ENCODE measurements at regions of chr11 and their contacts with region 1.

Region 1: DNA sequence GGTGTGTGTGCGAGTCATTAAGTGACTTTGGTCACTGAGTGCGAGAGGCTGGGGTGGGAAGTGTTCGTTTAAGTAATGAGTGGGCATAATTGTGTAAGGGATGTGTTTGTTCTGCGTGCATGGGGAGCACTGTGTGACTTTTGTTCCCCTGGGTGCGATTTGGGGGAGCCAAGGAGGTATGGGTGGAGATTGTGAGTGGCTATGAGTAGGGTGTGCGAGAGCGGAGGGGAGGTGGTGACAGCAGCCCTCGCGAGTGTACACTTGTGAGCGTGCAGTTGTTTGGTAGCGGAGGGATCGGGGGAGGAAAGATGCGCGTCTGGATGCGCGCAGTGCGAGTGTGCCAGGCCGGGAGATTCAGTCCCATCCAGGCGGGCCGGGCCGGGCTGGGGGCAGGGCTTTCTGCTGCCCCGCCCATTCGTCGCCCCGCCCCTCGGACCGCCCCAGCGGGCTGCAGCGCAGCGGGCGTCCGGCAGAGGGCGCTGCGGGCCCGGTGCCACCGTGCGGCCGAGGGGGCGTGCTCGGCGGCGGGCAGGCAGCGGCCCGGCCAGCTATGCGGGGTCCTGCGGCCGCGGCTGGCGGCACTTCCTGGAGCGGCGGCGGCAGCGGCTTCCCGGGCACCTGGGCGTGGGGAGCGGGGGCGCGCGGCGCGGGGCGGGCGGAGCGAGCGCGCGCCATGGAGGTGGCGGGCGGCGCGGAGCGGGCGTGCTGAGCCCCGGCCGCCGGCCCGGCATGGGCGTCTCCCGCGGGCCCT is at the start of gene DGKZ:
- DNase-seq: peak; percentile 92
- H3K4me3 Mint-ChIP-seq: peak within 1 kb of the TSS; percentile 86
- H3K27ac Mint-ChIP-seq: peak within 1 kb of the TSS; percentile 90
- H3K4me1 Mint-ChIP-seq: peaks cover 80% of the 10 kb centered on the region
- H3K27me3 Mint-ChIP-seq: no peaks in the 10 kb centered on the region
- total RNA-seq, gene DGKZ: 85.3 to 88.7 TPM

Region 2: DNA sequence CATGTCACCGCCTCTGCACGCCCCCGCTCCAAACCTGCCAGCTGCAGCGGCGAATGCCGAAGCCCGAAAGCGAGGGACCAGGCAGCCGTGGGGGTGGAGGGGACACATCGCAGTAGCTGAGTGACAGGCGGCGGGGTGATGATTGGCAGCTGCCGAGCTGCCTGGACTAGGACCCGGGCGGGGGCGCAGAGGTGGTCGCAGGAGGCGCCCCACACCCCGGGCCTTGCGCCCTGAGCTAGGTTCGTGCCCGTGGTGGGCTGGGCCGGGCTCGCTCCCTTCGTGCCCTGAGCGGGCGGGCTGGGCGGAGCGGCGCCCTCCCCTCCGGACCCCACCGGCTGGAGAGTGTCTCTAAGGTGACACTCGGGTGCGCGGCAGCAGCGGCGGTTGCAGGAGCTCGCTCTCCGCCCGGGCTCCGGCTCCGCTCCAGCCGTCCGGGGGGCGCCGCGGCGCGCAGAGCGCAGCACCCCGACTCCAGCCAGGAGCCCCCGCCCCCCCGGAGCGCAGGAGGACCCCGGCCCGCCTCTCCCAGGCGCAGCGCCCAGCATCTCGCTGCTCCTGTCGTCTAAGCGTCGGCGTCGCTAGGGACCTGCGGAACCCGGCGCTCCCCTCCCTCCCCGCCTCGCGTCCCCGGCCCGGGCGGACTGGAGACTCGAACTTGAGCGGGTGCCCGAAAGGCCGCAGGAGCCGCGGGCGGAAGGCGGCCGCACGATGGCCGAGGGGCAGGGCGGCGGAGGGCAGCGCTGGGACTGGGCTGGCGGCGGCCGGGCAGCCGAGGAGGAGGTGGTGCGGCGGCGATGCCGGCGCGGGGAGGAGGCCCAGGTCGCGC is 14.3 kb before region 1 on chr11:
- CTCF ChIA-PET with region 1: interaction called, 52 read pairs
- POLR2A ChIA-PET with region 1: interaction called, 6 read pairs
- intact Hi-C with region 1: loop called (anchors 1 kb)
- DNase-seq: peak; percentile 64
- H3K4me3 Mint-ChIP-seq: peak overlapping the region; percentile 73
- H3K27ac Mint-ChIP-seq: peak overlapping the region; percentile 8
- H3K4me1 Mint-ChIP-seq: peaks cover 67% of the 10 kb centered on the region
- H3K27me3 Mint-ChIP-seq: no peaks in the 10 kb centered on the region

Region 3: GRCh38 chr11:46367244-46367915 is 20.3 kb after region 1 on chr11:
- CTCF ChIA-PET with region 1: interaction called, 346 read pairs
- POLR2A ChIA-PET with region 1: interaction called, 4 read pairs
- intact Hi-C with region 1: loop called (anchors 1 kb)
- DNase-seq: peak; percentile 84
- H3K4me3 Mint-ChIP-seq: no peak overlapping the region
- H3K27ac Mint-ChIP-seq: peak overlapping the region; percentile 67
- H3K4me1 Mint-ChIP-seq: peaks cover 38% of the 10 kb centered on the region
- H3K27me3 Mint-ChIP-seq: no peaks in the 10 kb centered on the region

Region 4: DNA sequence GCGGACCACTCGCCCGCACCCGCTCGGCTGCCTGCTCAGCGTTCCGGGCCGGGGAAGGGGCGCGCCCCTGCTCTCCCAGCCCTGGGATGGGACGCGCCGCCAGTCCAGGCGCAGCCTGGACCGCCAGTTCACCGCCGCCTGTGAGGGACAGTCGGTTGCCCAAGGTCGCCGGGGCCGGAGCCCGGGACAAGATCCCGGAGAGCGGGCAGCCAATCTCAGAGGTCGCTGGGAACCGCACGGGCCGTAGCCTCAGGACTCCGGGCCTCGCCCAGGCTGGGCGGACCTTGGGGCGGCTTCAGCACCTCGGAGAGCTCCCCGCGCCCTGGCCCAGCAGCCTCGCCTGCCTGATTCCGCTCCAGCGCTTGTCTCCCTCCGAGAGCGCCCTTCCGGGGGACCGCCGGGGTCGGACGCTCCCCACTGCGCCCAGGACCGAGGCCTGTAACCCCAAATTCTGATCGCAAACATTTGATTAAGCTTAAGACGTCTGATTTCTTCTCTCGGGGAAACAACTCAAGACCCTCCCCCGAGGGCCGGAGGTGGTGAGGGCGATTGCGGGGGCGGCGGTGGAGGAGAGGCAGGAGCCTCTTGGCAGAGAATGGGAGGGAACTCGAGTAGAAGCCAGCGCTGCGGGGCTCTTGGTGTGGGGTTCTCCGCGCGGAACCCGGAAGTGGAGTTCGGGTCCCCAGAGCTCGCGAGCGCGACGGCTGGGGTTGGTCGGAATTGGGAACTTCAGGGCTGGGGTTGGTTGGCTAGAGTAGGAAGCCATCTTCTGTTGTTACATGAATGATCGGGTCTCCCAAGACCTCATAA is 45.6 kb after region 1 on chr11:
- CTCF ChIA-PET with region 1: interaction called, 83 read pairs
- POLR2A ChIA-PET with region 1: interaction called, 3 read pairs
- intact Hi-C with region 1: no loop called
- DNase-seq: peak; percentile 87
- H3K4me3 Mint-ChIP-seq: peak overlapping the region; percentile 71
- H3K27ac Mint-ChIP-seq: no peak overlapping the region
- H3K4me1 Mint-ChIP-seq: peaks cover 27% of the 10 kb centered on the region
- H3K27me3 Mint-ChIP-seq: peaks cover 37% of the 10 kb centered on the region

Region 5: GRCh38 chr11:46700241-46701077 is 353.4 kb after region 1 on chr11 and contains the starts of genes ARHGAP1 and ZNF408:
- CTCF ChIA-PET with region 1: interaction called, 5 read pairs
- POLR2A ChIA-PET with region 1: interaction called, 3 read pairs
- intact Hi-C with region 1: loop called (anchors 2 kb)
- DNase-seq: peak; percentile 100
- H3K4me3 Mint-ChIP-seq: peak within 1 kb of the TSS; percentile 92
- H3K27ac Mint-ChIP-seq: peak within 1 kb of the TSS; percentile 95
- H3K4me1 Mint-ChIP-seq: peaks cover 50% of the 10 kb centered on the region
- H3K27me3 Mint-ChIP-seq: no peaks in the 10 kb centered on the region
- total RNA-seq, gene ARHGAP1: 45.8 to 46.2 TPM
- total RNA-seq, gene ZNF408: 9.4 to 10.7 TPM